ENCODE measurements at regions of chr1 and their contacts with region 1.

Region 1: DNA sequence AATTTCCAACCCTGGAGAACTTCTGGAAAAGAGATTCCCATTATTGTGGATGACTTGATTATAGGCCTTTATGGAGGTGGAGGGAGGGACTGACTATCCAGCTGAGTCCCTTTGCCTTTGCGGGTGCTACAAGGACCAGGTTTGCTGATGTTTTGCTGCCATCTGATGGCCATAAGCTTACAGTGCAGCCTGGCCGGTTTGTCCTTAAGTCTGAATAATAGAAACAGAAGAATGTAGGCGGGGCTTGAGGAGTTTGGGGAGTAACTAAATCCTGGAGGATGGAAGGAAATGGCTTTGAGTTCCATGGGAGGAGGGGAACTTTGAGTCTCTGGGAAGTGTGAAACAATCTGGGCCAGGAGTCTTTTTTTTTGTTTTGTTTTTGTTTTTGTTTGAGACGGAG is 55.7 kb upstream of the CD1D start:
- DNase-seq: peak; percentile 49
- ATAC-seq: peak; percentile 96
- H3K4me3 Mint-ChIP-seq: no peak overlapping the region
- H3K27ac Mint-ChIP-seq: no peak overlapping the region
- H3K4me1 Mint-ChIP-seq: peaks cover 3% of the 10 kb centered on the region
- H3K27me3 Mint-ChIP-seq: peaks cover 16% of the 10 kb centered on the region
- CTCF ChIP-seq: peak; percentile 25

Region 2: GRCh38 chr1:157369808-157370521 is 755.0 kb before region 1 on chr1:
- CTCF ChIA-PET with region 1: interaction called, 5 read pairs
- POLR2A ChIA-PET with region 1: no interaction called
- intact Hi-C with region 1: loop called (anchors 2 kb)
- DNase-seq: no peak
- ATAC-seq: peak; percentile 77
- H3K4me3 Mint-ChIP-seq: no peak overlapping the region
- H3K27ac Mint-ChIP-seq: no peak overlapping the region
- H3K4me1 Mint-ChIP-seq: no peaks in the 10 kb centered on the region
- H3K27me3 Mint-ChIP-seq: no peaks in the 10 kb centered on the region
- CTCF ChIP-seq: peak; percentile 96

Region 3: DNA sequence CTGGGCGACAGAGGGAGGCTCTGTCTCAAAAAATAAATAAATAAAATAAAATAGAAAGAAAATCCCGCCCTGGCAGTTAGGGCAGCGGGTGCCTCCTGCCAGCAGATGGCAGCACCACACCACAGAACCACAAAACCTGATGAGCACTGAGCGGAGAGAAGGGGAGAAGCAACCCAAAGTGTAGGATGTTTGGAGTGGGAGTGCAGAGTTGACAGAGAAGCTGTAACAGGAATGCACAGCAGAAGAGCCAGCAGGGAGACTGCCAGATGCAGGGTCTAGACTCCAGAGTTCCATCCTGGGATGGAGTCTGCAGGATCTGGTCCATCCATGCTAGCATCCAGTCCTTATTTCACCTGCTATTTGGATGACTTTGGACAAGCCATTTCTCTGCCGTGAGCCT is 161.3 kb before region 1 on chr1:
- CTCF ChIA-PET with region 1: interaction called, 164 read pairs
- POLR2A ChIA-PET with region 1: interaction called, 4 read pairs
- intact Hi-C with region 1: loop called (anchors 1 kb)
- DNase-seq: peak; percentile 52
- ATAC-seq: peak; percentile 57
- H3K4me3 Mint-ChIP-seq: no peak overlapping the region
- H3K27ac Mint-ChIP-seq: no peak overlapping the region
- H3K4me1 Mint-ChIP-seq: no peaks in the 10 kb centered on the region
- H3K27me3 Mint-ChIP-seq: peaks cover 22% of the 10 kb centered on the region
- CTCF ChIP-seq: peak; percentile 80

Region 4: DNA sequence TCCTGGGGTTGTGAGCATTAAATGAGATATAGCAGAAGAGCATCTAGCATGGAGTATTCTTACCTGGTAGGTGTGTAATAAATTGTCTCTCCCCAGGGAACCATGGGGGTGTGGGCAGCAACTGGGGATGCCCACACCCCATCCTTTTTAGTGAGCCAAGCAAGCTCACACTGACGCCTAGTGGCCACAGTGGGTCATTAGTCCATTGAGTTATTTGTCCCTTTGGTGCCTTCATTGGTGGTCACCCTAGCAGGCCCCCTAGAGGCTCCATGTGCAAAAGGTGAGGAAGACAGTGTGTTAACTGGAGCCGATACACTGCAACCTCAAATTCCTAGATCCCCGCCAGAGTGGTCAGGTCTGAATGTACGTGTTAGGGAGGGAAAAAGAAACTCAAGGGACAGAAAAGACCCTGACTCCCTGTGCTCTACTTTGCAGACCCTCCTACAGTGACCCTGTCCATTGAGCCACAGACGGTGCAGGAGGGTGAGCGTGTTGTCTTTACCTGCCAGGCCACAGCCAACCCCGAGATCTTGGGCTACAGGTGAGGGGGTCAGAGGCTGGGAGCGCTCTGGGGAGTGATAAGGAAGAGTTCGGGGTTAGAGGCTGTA is 37.6 kb before region 1 on chr1:
- CTCF ChIA-PET with region 1: interaction called, 184 read pairs
- POLR2A ChIA-PET with region 1: no interaction called
- intact Hi-C with region 1: loop called (anchors 5 kb)
- DNase-seq: no peak
- ATAC-seq: peak; percentile 70
- H3K4me3 Mint-ChIP-seq: no peak overlapping the region
- H3K27ac Mint-ChIP-seq: no peak overlapping the region
- H3K4me1 Mint-ChIP-seq: no peaks in the 10 kb centered on the region
- H3K27me3 Mint-ChIP-seq: peaks cover 8% of the 10 kb centered on the region
- CTCF ChIP-seq: no peak

Region 5: DNA sequence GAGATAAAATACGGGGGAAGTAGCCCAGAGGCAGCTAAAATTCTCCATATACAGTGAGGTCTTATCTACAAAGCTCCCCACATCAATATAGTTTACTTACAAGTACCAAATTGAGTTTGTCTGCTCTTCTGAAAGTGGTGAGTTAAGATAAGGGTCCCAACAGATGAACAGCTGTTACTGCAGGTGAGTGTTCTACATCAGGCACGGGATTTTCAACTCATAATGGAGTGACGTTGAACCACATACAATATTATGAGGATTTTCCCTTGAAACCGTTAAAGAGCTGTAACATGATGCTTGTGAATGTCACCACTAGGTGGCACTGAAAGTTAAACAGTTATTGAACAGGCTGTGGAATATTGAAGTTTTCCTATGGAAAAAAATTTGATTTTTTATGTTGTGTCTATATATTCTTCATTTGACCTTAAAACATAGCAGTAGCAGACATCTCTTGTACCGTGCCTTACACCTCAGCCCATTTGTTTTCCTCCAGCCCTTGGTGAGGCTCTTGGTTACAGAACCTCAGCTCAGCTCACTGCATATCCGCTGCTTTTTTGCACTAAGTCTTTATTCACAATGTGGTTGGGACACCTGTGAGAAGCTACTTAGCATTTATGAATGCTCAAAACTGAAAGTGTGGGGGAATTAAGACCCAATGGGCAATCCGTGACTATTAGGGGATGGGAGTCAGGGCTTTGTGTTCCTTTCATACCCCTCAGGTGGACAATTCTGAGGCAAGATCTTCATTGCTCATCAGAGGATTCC is 78.9 kb after region 1 on chr1:
- CTCF ChIA-PET with region 1: interaction called, 39 read pairs
- POLR2A ChIA-PET with region 1: no interaction called
- intact Hi-C with region 1: no loop called
- DNase-seq: no peak
- ATAC-seq: peak; percentile 69
- H3K4me3 Mint-ChIP-seq: peak overlapping the region; percentile 49
- H3K27ac Mint-ChIP-seq: peak overlapping the region; percentile 41
- H3K4me1 Mint-ChIP-seq: peaks cover 23% of the 10 kb centered on the region
- H3K27me3 Mint-ChIP-seq: no peaks in the 10 kb centered on the region
- CTCF ChIP-seq: no peak

Region 6: DNA sequence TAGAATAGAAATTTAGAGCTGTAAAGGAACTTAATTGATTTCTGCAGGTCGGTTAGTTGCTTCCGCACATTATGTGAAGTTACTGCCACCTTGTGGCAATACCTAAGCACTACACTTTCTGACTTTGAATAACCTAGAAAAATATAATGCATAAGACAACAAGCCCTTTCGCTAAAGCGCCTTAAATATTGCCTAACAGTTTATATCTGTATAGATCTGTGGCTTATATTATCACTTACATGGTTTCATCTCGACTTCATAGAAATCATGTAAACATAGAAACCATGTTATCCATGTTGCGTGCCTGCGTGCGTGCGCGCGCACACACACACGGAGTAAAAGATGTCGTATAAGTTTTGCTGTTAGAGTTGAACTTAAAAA is 873.8 kb after region 1 on chr1:
- CTCF ChIA-PET with region 1: interaction called, 10 read pairs
- POLR2A ChIA-PET with region 1: no interaction called
- intact Hi-C with region 1: no loop called
- DNase-seq: no peak
- ATAC-seq: peak; percentile 83
- H3K4me3 Mint-ChIP-seq: no peak overlapping the region
- H3K27ac Mint-ChIP-seq: no peak overlapping the region
- H3K4me1 Mint-ChIP-seq: peaks cover 20% of the 10 kb centered on the region
- H3K27me3 Mint-ChIP-seq: no peaks in the 10 kb centered on the region
- CTCF ChIP-seq: peak; percentile 59

Measured in activated B cell treated with CpG ODN at 0.5 μM for 24 hours (primary cell).